Activated T-helper 2 cell treated with anti-CD3 and anti-CD28 coated beads, Interferon-gamma antibody, Interleukin-2, Interleukin-4, amounts not matched to agents 10 μg/mL and 5 μg/mL and 100 μg/mL, durations not matched to agents 14 hours and 24 hours and 36 hours (primary cell): ENCODE measurements at regions of chr12 and their contacts with region 1.

Region 1: DNA sequence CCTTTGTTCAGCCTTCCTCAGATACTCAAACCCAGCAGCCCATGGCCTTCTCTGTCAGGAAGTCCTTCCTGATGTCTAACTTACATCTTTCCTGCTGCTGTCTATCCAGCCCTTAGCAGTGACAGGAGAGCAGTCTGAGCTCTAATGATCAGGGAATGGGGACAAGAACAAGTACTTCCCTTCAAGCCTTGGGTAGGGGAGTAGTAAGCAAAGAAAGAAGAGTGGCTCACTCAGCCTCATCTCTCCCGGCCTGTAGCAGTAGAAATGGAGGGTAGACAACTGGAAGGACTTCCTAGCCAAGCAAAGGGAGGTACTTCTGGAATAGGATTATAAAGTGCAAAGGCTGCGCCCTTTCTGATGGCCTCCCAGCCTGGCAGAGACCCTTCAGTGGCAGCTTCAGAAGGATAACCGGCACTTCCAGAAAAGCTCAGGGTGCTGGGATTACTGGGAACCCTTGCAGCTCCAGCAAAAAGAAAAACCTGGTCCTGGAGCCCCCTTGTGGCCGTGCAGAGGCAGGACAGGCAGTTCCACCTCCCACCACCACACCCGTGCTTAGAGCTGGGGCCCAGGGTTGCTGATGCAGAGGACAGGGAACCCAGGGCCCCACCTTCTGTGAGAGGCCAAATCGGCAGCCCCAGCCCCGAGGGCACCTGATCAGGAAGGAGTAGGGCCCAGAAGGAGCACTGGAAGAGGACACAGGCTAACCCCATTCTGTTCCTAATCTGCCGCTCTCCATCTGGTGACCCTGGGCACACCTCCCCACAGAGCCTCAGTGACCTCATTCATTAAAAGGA is 12.4 kb upstream of the SMUG1 start:
- DNase-seq: peak; percentile 53
- H3K4me3 Mint-ChIP-seq: no peak overlapping the region
- H3K27ac Mint-ChIP-seq: no peak overlapping the region
- H3K4me1 Mint-ChIP-seq: no peaks in the 10 kb centered on the region
- H3K27me3 Mint-ChIP-seq: peaks cover 53% of the 10 kb centered on the region

Region 2: DNA sequence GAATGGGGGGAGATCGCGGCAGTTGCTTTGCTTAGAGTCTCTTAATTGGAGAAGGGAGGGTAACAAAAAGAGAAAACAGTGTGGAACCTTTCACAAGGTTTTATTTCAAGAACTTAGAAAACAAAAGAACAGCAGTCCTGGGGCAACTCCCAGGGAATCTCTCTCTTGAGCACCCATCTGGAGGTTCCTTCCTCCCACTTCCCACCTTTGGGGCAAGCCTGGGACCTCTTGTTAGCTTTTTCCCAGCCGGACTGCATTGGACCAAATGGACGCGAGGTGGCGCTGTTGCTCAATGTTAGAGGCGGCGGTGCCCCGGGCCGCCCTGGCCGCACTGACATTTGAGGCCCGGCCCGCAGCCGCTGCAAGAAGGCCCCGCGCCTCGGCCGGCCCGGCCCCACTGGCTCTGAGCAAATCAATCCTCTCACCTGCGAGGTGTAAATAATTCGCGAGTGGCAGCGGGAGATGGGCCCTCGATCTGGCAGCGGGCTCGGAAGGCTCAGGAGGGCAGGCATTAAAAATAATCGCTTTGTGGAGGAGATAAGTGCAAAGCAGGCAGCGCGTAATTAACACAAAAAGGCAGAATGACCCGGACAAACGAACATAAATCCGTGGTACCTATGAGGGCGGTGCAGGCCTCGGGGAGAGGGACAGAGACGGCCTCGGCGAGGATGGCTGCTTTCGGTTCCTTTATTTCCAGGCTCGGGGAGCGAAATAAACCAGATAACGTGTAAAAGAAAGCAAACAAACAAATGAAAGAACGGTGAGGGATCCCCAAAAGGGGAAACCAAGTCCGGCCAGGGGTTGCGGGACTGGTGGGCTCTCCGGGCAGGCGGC is 195.1 kb before region 1 on chr12:
- intact Hi-C with region 1: loop called (anchors 1 kb)
- DNase-seq: peak; percentile 76
- H3K4me3 Mint-ChIP-seq: peak overlapping the region; percentile 79
- H3K27ac Mint-ChIP-seq: no peak overlapping the region
- H3K4me1 Mint-ChIP-seq: peaks cover 18% of the 10 kb centered on the region
- H3K27me3 Mint-ChIP-seq: peaks cover 92% of the 10 kb centered on the region